ENCODE measurements at regions of chr6 and their contacts with region 1.

Region 1: DNA sequence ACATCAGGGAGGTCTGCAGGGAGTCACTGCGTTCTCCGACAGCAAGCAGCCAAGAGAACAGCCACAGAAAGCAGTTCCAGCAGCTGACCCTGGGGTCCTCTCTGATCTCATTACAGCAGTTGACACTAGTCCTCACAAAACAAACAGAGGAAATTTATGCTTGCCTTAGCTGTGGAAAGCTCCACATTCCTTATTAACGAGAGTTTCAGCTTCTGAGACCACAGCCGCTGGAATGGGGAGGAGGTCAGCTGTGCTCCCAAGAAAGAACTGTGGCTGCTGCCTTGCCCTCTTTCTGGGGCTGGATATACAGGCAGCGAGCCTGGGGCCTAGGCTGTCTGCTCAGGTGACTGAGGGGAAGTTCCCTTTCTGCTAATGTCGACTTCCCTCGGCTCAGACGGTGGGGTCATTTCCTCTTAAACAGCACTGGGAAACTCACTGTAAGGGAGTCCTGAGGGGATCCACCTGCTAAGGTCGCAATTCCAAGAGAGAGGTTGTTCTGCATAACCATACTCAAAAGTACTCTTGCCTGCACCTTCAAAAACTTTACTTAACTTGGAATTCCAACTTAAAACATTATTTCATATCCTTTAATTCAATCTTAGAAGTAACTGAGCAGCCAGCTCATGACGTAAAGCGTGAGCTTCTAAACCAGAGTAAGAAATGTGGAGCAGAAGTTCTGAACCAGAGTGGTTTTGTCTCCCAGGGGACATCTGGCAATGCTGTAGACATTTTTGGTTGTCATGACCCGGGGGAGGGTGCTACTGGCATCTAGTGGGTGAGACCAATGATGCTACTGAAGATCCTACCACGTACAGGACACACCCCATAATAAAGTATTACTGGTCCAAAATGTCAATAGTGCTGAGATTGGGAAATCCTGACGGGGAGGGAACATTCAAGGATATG is 80.3 kb downstream of the BACH2 start:
- DNase-seq: peak; percentile 95
- ATAC-seq: peak; percentile 84
- H3K4me3 ChIP-seq: no peak overlapping the region
- H3K4me3 Mint-ChIP-seq: peak overlapping the region; percentile 73
- H3K27ac ChIP-seq: peak overlapping the region; percentile 85 to 96
- H3K27ac Mint-ChIP-seq: no peak overlapping the region
- H3K4me1 ChIP-seq: peaks cover 83 to 84% of the 10 kb centered on the region in 2 donors
- H3K4me1 Mint-ChIP-seq: peaks cover 28% of the 10 kb centered on the region
- H3K27me3 ChIP-seq: no peaks in the 10 kb centered on the region
- H3K27me3 Mint-ChIP-seq: no peaks in the 10 kb centered on the region
- CTCF ChIP-seq: peak; percentile 63

Region 2: DNA sequence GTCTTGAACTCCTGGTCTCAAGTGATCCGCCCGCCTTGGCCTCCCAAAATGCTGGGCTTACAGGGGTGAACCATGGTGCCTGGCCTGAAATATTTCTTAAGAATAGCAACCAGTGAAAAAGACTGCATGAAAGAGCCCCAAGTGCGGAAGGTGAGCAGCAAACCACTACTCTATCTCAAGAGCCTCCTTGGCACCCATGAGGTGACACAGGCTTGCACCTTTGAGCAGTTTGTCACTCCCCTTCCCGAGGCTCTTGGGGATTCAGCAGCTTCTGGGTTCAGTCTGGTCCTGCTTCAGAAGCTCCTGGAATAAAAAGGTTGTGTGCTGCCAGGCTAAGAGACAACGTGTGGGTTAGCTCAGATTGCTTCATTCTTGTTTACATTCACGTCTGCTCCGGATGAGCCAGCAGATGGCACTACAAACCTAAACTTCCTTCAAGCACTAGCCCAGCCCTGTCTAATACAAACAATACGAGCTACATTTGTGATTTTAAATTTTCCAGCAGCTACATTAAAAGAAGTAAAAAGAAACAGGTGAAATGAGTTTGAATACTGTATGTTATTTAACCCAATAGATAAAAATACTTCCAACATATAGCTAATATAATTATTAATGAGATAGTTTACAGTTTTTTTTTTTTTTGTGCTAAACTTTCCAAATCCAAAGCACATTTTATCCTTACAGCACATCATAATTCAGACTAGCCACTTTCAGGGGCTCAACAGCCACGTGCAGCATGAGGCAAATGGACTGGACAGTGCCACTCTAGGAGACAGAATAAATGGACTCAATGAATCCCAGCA is 275.9 kb before region 1 on chr6:
- CTCF ChIA-PET with region 1: interaction called, 84 read pairs
- POLR2A ChIA-PET with region 1: interaction called, 3 read pairs
- intact Hi-C with region 1: loop called (anchors 1 kb)
- DNase-seq: peak; percentile 68
- ATAC-seq: peak; percentile 81
- H3K4me3 ChIP-seq: no peak overlapping the region
- H3K4me3 Mint-ChIP-seq: no peak overlapping the region
- H3K27ac ChIP-seq: no peak overlapping the region
- H3K27ac Mint-ChIP-seq: peak overlapping the region; percentile 64
- H3K4me1 ChIP-seq: no peaks in the 10 kb centered on the region
- H3K4me1 Mint-ChIP-seq: peaks cover 7% of the 10 kb centered on the region
- H3K27me3 ChIP-seq: no peaks in the 10 kb centered on the region
- H3K27me3 Mint-ChIP-seq: no peaks in the 10 kb centered on the region
- CTCF ChIP-seq: peak; percentile 79

Region 3: GRCh38 chr6:89970609-89971337 is 245.6 kb before region 1 on chr6:
- CTCF ChIA-PET with region 1: interaction called, 9 read pairs
- POLR2A ChIA-PET with region 1: no interaction called
- intact Hi-C with region 1: loop called (anchors 1 kb)
- DNase-seq: peak; percentile 33
- ATAC-seq: no peak
- H3K4me3 ChIP-seq: no peak overlapping the region
- H3K4me3 Mint-ChIP-seq: no peak overlapping the region
- H3K27ac ChIP-seq: peak overlapping the region in 1 of 2 donors; percentile 33
- H3K27ac Mint-ChIP-seq: no peak overlapping the region
- H3K4me1 ChIP-seq: no peaks in the 10 kb centered on the region
- H3K4me1 Mint-ChIP-seq: peaks cover 17% of the 10 kb centered on the region
- H3K27me3 ChIP-seq: no peaks in the 10 kb centered on the region
- H3K27me3 Mint-ChIP-seq: no peaks in the 10 kb centered on the region
- CTCF ChIP-seq: no peak

Region 4: DNA sequence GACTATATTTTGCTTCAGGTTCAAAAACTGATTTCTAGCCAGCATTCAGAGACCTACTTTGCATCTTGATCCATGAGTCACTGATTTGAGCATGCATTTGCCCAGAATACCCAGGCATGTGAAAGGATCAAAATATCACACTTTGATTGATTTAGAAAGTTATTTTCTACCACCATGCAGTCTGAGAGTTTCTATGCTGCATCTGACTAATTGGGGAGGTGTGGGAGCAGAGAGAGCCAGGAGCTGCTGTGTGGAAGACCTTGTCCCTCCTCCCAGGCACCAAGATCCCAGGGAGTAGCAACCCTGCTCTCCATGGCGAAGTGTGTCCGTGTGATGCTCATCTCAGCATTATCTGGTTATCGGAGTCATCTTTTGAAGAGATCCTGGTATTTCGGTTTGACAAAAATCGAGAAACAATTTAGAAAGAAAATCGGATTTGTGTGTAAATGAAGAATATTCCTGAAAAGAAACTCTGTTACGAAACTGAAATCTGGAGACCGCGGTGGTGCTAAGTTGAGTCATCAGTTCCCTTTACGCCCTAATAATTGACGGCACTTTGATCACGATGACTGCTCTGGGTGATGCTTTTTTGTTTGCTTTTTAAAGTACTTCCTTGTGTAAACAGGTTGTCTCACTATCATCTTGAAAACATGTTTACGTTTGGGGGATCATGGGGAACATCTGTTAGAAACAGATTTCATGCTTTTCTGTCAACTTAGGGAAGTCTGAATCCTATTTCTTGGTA is 113.1 kb before region 1 on chr6:
- CTCF ChIA-PET with region 1: interaction called, 4 read pairs
- POLR2A ChIA-PET with region 1: interaction called, 4 read pairs
- intact Hi-C with region 1: loop called (anchors 2 kb)
- DNase-seq: peak; percentile 71
- ATAC-seq: peak; percentile 62
- H3K4me3 ChIP-seq: peak overlapping the region in 2 of 5 experiments; percentile 6 to 40
- H3K4me3 Mint-ChIP-seq: peak overlapping the region; percentile 89
- H3K27ac ChIP-seq: peak overlapping the region in 1 of 2 donors; percentile 78
- H3K27ac Mint-ChIP-seq: peak overlapping the region; percentile 87
- H3K4me1 ChIP-seq: peaks cover 81 to 86% of the 10 kb centered on the region in 2 donors
- H3K4me1 Mint-ChIP-seq: peaks cover 92% of the 10 kb centered on the region
- H3K27me3 ChIP-seq: no peaks in the 10 kb centered on the region
- H3K27me3 Mint-ChIP-seq: no peaks in the 10 kb centered on the region
- CTCF ChIP-seq: no peak

Region 5: DNA sequence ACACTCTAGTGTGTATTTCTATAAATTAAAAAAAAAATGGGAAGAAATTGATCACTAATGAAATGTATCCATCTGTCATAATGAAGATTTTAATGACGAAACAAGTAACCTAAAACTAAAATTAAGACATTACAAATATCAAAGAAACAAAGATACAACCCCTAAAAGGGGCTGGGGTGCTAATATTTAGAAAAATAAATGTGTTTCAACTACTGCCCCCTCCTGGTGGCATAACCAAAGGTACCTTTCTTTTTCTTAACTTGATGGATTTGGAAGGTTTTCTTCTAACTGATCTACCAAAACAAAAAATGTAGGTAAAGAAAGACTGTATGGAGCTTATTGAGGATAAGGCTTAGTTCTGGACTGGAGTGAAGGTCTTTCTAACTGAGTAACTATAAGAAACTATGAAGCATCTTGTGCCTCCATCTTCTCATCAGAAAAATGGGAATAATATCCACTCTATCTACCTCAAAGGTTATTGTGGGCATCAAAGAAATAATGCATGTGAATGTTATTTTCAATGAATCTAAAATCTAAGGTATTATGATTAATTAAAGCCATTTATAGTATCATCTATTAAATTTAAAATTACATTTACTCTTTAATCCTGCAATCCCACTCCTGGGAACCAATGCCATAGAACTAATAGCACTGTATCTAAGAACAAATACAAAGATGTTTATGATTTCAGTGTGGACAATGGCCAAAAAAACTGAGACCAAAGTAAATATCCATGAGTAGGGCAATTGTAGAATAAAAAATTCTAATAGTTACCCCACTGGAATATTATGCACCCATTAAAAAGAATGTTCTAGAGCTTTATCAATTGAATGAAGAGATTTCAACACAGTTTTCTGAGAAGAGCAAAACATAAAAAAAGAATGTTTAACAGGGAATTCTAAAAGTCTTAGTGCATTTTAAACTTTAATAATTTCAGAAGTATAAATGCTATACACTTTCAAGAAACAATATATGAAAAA is 36.8 kb before region 1 on chr6:
- CTCF ChIA-PET with region 1: interaction called, 10 read pairs
- POLR2A ChIA-PET with region 1: interaction called, 6 read pairs
- intact Hi-C with region 1: loop called (anchors 2 kb)
- DNase-seq: peak; percentile 49
- ATAC-seq: no peak
- H3K4me3 ChIP-seq: peak overlapping the region in 1 of 5 experiments; percentile 37
- H3K4me3 Mint-ChIP-seq: peak overlapping the region; percentile 79
- H3K27ac ChIP-seq: peak overlapping the region; percentile 61 to 91
- H3K27ac Mint-ChIP-seq: peak overlapping the region; percentile 81
- H3K4me1 ChIP-seq: peaks cover 56 to 64% of the 10 kb centered on the region in 2 donors
- H3K4me1 Mint-ChIP-seq: peaks cover 81% of the 10 kb centered on the region
- H3K27me3 ChIP-seq: no peaks in the 10 kb centered on the region
- H3K27me3 Mint-ChIP-seq: no peaks in the 10 kb centered on the region
- CTCF ChIP-seq: peak; percentile 73

Region 6: DNA sequence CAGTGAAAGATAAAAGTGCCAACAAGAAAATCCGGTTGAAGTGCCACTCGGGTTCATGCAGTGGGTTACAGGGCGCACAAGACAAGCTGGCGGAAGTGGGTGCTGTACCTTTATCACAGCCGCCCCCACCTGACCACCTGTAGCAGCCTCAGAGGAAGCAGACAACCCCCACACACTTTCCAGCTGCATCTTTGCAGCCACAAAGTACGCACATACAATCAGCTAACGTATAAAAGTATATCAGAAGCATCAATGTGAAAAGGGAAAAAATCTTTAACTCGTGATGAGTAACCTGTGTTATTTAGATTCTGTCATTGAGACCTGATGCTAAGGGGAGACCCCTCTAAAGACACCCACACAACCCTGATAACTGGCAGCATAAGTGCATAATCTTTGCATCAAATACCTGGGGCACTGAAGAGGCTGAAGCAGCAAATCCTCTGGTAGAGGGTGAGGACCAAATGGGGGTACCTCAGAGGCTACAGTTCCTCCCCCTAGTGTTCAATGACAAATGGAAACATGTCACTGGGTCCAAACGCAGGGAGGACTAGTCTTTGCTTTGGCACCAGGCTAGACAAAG is 58.2 kb after region 1 on chr6:
- CTCF ChIA-PET with region 1: interaction called, 14 read pairs
- POLR2A ChIA-PET with region 1: no interaction called
- intact Hi-C with region 1: loop called (anchors 1 kb)
- DNase-seq: peak; percentile 94
- ATAC-seq: peak; percentile 92
- H3K4me3 ChIP-seq: peak overlapping the region in 1 of 5 experiments; percentile 11
- H3K4me3 Mint-ChIP-seq: peak overlapping the region; percentile 59
- H3K27ac ChIP-seq: peak overlapping the region; percentile 95 to 97
- H3K27ac Mint-ChIP-seq: peak overlapping the region; percentile 87
- H3K4me1 ChIP-seq: peaks cover 55 to 75% of the 10 kb centered on the region in 2 donors
- H3K4me1 Mint-ChIP-seq: peaks cover 84% of the 10 kb centered on the region
- H3K27me3 ChIP-seq: no peaks in the 10 kb centered on the region
- H3K27me3 Mint-ChIP-seq: no peaks in the 10 kb centered on the region
- CTCF ChIP-seq: peak; percentile 34

Region 7: GRCh38 chr6:90383196-90383822 is 167.0 kb after region 1 on chr6:
- CTCF ChIA-PET with region 1: interaction called, 3 read pairs
- POLR2A ChIA-PET with region 1: no interaction called
- intact Hi-C with region 1: loop called (anchors 2 kb)
- DNase-seq: peak; percentile 86
- ATAC-seq: peak; percentile 84
- H3K4me3 ChIP-seq: peak overlapping the region in 2 of 5 experiments; percentile 19 to 50
- H3K4me3 Mint-ChIP-seq: peak overlapping the region; percentile 78
- H3K27ac ChIP-seq: peak overlapping the region; percentile 65 to 93
- H3K27ac Mint-ChIP-seq: peak overlapping the region; percentile 92
- H3K4me1 ChIP-seq: peaks cover 72 to 74% of the 10 kb centered on the region in 2 donors
- H3K4me1 Mint-ChIP-seq: peaks cover 79% of the 10 kb centered on the region
- H3K27me3 ChIP-seq: no peaks in the 10 kb centered on the region
- H3K27me3 Mint-ChIP-seq: no peaks in the 10 kb centered on the region
- CTCF ChIP-seq: no peak